BJ (cell line): ENCODE measurements at regions of chr1 and their contacts with region 1.

Region 1: DNA sequence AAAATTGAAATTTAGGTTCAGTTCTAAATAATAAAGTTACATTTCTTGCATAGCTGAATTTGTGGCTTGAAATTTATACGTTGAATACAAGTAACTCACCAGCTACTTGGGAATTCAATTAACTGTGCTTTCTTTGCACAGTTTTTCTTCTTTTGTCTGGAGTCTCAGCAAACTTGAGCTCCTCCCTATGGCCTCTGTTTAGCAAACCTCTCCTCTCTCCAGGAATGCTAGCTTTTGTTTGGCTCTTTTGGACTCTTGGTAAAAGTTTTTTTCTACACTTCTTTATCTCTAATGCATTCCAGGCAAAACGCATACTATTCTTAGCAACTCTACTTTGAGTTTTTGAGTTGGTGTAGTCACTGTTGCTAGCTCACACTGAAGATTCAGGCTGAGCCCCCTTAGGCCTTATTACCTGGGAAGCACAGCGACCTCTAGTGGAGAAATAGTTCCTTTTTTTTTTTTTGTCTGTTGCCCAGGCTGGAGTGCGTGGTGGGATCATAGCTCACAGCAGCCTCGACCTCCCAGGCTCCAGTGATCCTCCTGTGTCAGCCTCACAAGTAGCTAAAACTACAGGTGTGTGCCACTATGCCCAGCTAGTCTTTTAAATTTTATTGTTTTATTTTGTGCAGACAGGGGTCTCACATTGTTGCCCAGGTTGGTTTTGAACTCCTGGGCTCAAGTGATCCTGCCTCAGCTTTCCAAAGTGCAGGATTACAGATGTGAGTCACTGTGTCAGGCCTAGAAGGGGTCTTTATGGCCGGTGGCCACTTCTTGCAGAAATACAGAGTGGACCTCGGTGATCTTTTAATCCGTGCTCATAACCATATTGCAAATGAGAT is 61.7 kb downstream of the CASQ2 start:
- DNase-seq: no peak
- H3K4me3 ChIP-seq: no peak overlapping the region
- H3K27me3 ChIP-seq: peaks cover 11% of the 10 kb centered on the region
- CTCF ChIP-seq: peak; percentile 74

Region 2: GRCh38 chr1:115239148-115239820 is 467.5 kb before region 1 on chr1:
- CTCF ChIA-PET with region 1: no interaction called
- POLR2A ChIA-PET with region 1: no interaction called
- DNase-seq: peak; percentile 71
- H3K4me3 ChIP-seq: no peak overlapping the region
- H3K27me3 ChIP-seq: no peaks in the 10 kb centered on the region
- CTCF ChIP-seq: no peak

Region 3: GRCh38 chr1:115609021-115609420 is 97.8 kb before region 1 on chr1:
- CTCF ChIA-PET with region 1: interaction called, 77 read pairs
- POLR2A ChIA-PET with region 1: interaction called, 3 read pairs
- DNase-seq: no peak
- H3K4me3 ChIP-seq: no peak overlapping the region
- H3K27me3 ChIP-seq: peaks cover 6% of the 10 kb centered on the region
- CTCF ChIP-seq: no peak

Region 4: GRCh38 chr1:115685029-115685705 is 21.6 kb before region 1 on chr1:
- CTCF ChIA-PET with region 1: interaction called, 17 read pairs
- POLR2A ChIA-PET with region 1: no interaction called
- DNase-seq: no peak
- H3K4me3 ChIP-seq: no peak overlapping the region
- H3K27me3 ChIP-seq: no peaks in the 10 kb centered on the region
- CTCF ChIP-seq: no peak

Region 5: DNA sequence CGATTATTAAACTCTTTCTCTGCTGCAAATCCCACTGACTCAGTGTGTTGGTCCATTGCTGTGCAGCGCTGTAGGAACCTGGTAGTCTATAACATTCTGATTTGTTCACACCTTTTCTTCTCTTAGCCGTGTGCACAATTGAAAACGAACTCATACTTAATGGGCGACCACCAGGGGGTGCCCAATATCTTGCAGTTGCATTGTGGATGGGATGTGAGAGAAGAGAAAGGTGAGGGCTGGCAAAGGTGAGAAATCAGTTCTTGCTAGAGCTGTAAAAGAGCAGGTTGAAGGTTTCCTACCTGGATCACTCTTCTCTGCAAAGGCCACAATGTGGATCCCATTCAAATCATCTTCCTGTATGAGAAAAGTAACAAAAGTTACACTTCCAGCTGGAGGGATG is 10.7 kb after region 1 on chr1:
- CTCF ChIA-PET with region 1: interaction called, 53 read pairs
- POLR2A ChIA-PET with region 1: no interaction called
- DNase-seq: no peak
- H3K4me3 ChIP-seq: no peak overlapping the region
- H3K27me3 ChIP-seq: peaks cover 9% of the 10 kb centered on the region; the same call in 1 of the 2 replicates
- CTCF ChIP-seq: peak; percentile 53

Region 6: DNA sequence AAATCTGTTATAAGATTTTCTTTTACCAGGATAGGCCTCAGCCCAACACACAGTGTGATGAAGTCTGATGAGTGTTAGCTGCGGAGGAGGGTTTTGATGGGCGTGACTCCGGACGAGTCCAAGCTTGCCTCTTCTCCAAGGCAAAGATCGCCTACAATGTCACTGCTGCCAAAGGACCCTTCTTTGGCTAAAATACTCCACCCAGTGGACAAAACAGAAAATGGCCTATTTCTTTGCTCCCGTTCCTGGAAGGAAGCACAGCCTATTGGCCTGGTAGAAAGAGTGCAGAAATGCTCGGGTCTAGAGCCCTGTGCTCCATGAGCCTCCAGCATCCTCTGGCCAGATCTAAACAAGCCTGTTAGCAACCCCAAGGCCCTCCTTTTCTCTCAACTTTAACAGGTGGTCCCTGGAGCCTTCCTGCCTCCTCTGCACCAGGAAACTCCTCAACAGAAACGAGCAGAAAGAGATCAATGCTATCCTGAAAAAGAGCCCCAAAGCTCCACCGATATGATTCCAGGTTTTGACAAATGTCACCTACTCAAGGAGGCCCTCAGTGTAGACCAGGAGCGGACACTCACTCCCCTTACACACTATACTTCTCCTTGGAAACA is 65.1 kb after region 1 on chr1:
- CTCF ChIA-PET with region 1: interaction called, 19 read pairs
- POLR2A ChIA-PET with region 1: no interaction called
- DNase-seq: peak; percentile 37
- H3K4me3 ChIP-seq: no peak overlapping the region
- H3K27me3 ChIP-seq: peaks cover 4% of the 10 kb centered on the region
- CTCF ChIP-seq: peak; percentile 75

Region 7: DNA sequence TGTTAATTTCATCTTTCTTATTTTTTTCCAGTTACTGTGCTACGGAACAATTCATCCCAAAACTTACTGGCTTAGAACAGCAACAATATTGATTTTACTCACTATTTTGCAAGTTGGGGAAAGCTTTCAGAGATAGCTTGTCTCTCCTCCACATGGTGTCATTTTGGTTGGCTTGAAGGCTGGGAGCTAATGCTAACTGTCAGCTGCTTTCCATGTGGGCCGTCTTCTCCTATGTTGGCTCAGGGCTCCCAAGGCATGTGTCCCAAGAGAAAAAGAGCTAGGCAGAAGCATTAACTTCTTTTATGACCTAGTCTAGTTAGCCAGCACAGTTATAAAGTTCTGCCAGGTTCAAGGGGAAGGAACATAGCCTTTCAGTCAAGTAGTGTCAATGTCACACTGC is 95.6 kb after region 1 on chr1:
- CTCF ChIA-PET with region 1: no interaction called
- POLR2A ChIA-PET with region 1: no interaction called
- DNase-seq: no peak
- H3K4me3 ChIP-seq: no peak overlapping the region
- H3K27me3 ChIP-seq: no peaks in the 10 kb centered on the region; the same call in 1 of the 2 replicates
- CTCF ChIP-seq: no peak

Region 8: GRCh38 chr1:115916311-115916710 is 209.5 kb after region 1 on chr1:
- CTCF ChIA-PET with region 1: no interaction called
- POLR2A ChIA-PET with region 1: no interaction called
- DNase-seq: no peak
- H3K4me3 ChIP-seq: no peak overlapping the region
- H3K27me3 ChIP-seq: peaks cover 4% of the 10 kb centered on the region
- CTCF ChIP-seq: no peak